Left cardiac atrium (tissue), 4 donors: ENCODE measurements at regions of chr19 and their contacts with region 1.

Region 1: DNA sequence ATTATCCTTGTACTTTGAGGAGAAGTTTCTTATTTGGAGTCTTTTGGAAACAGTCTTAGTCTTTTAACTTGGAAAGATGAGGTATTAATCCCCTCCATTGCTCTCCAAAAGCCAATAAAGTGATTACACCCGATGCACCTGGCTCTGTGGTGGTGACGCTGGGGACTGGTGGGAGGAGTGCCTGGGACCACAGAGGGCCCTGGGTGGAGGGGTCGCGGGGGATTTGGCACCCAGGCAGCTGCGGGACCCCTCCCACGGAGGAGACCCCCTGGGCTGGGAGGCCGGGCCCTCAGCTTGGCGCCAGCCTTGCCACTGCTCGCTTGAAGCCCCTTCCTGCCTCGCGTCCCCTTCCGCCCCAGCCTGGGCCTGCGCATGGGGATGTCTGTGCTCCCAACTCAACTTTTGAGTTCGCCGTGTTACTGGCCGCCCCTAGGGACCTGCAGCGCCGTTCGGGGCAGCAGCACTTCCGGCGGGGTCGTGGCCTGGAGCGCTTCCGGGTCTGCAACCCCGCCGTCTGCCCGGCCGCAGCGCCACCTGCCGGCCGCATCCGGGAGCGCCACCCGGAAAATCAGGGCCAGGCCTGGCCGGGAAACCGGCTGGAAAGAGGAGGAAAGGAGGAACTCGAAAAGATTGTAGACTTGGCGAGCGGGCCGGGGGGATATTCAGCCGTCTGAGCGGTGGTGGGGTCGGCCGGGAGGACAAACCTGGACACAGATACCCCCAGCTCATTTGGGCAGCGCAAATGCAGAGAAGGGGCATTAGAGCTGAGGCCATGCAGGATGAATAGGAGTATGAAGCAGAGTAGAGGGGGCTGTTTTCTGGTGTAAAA is 8.4 kb downstream of the PEAK3 start:
- DNase-seq: peak; percentile 83
- ATAC-seq: peak; percentile 3 to 12

Region 2: GRCh38 chr19:2157452-2157851 is 116.1 kb before region 1 on chr19:
- intact Hi-C with region 1: loop called in 1 of 2 experiments (anchors 2 kb)
- DNase-seq: no peak
- ATAC-seq: no peak

Region 3: GRCh38 chr19:2236314-2237050 is 37.1 kb before region 1 on chr19 and contains the starts of genes PLEKHJ1 and SF3A2:
- intact Hi-C with region 1: loop called in 1 of 2 experiments (anchors 5 kb)
- DNase-seq: peak; percentile 97
- ATAC-seq: peak; percentile 92 to 93
- total RNA-seq, gene PLEKHJ1: 45.2 to 45.7 TPM
- total RNA-seq, gene SF3A2: 28.8 to 34.4 TPM

Region 4: DNA sequence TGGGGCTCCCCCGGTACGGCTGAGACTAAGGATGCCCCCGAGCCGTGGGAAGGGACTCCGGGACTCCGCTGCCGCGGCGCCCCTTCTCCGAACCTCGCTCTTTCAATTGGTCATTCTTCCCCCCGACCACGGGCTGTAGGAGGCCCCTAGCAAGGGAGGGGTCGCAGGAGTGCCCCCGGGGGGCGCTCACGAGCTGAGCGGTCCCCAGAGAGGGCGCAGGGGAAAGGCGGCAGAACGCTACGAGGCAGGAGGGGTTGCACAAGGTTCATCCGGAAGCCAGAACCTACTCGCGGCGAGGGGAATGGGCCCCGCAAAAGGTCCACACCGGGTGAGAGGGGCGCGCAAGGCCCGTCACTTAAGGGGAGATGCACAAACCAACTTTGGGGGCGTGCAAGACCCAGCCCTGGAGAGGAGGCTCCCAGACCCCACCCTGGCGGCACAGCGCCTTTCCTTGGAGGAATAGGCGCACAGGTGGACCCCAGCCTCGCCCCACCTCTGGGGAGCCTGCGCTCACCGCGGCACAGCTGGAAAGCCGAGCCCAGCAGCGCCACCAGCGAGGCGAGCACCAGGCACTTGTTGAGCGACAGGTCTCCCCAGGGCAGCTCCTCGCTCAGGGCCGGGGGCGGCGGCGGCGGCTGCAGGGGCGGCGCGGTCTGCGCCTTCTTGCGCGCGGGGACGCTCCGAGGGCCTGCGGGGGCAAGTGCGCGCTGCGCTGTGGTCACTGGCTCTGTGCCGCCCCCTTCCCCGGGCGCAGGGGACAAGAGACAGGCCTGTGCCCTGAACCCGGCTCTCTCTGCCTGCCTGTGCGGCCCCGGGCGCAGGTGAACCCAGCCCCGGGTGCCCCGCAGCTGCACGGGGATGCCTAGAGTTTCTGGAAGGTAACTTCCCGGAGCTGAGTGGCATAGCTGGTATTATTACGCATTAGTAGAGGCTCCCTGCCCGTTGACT is 20.2 kb before region 1 on chr19:
- intact Hi-C with region 1: no loop called
- DNase-seq: no peak
- ATAC-seq: no peak

Region 5: DNA sequence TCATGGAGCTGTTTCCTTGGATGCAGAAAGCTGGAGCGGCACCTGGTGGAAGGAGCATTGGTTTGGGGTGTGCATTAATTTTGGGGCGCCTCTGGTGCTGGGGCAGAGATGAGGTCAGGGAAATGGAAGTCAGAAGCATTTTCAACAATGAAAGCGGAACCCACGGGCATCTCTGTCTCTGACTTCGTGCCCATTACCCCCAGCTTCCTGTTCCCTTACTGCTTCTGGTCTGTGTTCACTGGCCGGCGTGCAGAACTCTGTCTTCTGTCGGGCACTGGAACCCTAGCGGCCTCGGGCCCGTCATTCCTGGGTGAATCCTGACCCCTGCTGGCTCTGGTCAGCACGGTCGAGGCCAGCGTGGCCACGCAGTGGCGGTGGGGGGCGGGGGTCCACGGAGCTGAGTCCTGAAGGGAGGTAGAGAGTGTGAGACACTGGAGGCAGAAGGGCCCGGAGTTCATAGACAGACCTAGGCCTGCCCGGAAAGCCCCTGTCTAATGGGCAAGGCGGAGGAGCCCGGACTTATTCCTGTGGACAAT is 42.3 kb after region 1 on chr19:
- intact Hi-C with region 1: loop called in 1 of 2 experiments (anchors 5 kb)
- DNase-seq: peak; percentile 75
- ATAC-seq: peak; percentile 91 to 93

Region 6: DNA sequence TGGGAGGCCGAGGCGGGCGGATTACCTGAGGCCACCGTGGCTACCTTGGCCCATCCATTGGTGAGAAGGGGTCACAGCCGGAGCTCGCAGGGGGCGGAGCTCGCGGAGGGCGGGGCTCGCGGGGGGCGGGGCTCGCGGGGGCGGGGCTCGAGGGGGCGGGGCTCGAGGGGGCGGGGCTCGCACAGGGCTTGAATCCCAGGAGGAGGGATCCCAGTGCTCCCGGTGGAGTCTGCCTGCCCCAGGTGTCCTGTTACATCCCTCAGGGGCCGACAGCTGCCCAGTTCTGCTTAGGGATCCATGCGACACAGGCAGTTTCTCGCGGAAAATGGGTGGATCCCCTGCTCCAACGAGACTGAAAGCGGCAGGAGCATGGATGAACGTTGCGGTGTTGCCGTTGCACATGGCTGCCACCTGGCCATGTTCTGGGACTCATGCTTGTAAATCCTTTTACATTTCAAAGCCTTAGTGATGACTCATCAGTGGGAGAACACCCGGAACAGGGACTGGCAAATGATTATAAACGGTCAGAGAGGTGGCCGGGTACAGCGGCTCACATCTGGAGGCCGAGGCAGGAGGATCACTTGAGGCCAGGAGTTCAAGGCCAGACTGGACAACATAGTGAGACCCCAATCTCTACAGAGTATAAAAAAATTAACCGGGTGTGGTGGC is 111.6 kb after region 1 on chr19:
- intact Hi-C with region 1: loop called in 1 of 2 experiments (anchors 5 kb)
- DNase-seq: no peak
- ATAC-seq: no peak

Region 7: GRCh38 chr19:2969104-2969504 is 695.5 kb after region 1 on chr19:
- intact Hi-C with region 1: no loop called
- DNase-seq: peak; percentile 73
- ATAC-seq: peak; percentile 53 to 62